Right ventricle myocardium inferior (tissue), 1 donor: ENCODE measurements at regions of chr9 and their contacts with region 1.

Region 1: GRCh38 chr9:73151653-73152542 is at the start of gene ANXA1:
- DNase-seq: no peak
- ATAC-seq: peak; percentile 79
- total RNA-seq, gene ANXA1: 75.7 TPM

Region 2: DNA sequence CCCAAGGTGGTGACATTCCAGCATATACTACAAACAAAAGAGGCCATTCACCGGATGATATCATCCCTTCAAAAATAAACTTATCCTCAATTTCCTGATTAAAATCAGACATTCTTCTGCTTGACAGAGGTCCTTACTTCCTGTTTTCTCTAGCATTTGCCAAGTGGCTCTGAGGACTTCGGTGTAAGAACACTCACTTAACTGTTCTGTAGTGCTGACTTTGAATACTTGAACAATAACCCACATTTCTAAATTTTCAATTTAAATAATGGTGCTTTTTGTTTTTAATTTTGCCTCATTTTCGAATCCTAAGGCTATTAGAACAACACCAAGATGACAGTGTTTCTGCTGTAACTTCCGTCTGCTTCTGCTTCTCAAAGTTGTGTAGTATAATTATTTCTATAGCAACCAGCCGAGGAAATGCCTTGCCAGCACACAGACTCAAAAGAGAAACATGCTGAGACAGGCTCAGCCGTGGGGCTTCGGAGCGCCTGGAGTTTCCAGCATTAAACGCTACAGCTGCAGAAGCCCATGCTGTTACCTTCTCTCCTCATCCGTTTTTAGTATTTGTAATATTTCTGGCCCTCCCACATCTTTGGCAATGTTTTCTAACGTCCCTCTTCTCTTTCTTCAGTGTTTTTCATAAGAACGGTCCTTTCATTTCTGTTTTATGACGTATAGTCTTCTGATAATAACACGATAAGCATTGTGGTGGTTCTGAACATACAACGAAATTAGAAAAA is 19.7 kb before region 1 on chr9:
- intact Hi-C with region 1: loop called (anchors 2 kb)
- DNase-seq: peak; percentile 85
- ATAC-seq: peak; percentile 94

Region 3: DNA sequence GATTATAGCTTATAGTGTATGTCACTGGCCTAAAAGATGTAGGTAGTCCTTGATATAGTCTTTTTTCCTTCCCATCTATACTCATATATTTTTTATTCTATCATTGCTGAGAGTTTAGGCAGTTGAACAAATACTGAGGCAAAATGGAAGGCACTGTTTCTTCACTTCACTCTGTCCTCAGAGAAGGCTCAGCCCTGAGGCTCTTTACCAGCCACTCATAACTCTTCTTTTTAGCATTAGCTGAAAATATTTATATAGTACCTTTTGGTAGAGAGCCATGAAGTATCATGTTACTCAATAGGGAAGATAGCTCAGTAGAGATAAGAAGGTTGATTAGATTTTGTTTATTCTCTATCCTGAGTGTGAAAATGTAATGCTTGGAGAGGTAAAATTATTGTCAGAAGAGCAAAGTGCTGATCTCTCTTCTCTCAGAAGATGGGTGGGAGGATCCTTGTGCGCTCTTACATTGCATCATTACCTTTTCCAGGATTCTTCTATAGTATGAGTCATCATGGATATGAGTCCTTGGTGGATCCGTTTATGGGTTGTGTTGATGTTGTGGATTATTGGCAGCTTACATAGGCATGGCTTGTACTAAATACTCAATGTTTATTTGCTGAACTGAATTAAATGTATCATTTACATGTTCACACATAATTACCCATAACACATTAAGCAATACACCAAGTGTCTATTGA is 87.8 kb after region 1 on chr9:
- intact Hi-C with region 1: no loop called
- DNase-seq: no peak
- ATAC-seq: no peak